Ovary (tissue), 10 donors: ENCODE measurements at regions of chr11 and their contacts with region 1.

Region 1: DNA sequence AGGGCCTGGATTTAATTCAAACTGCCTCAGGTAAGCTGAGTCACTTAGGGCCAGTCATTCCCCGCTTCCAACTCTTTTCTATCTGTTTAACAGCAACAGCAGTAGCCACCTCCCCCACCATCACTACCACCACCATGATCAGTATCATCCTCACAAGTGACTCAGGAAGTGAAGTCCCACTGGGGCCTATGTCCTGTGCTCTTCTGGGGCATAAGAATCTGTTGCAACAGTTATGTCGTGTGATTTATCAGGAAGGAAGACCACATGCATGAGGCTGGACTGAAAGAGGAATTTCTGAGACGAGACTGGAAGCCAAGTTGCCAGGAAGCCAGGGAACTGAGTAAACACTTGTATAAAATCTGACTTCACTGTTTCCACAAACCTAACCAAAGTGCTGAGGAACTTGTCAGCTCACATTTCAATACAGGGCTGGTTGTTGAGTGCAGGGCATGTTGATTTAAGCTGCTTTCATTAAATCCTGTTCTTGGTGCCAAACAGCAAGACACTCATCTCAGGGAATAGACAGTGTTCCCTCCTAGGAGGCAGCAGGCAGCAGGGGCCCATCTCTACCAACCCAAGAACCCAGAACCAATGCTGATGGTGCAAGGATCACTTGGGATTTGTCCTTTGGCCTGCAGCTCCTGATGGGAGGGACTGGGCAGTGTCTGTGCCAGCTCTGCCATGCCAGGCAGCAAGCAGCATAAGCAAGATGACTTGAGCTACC is 226.7 kb upstream of the NARS2 start:
- DNase-seq: peak in 1 of 5 donors; percentile 49
- H3K4me3 ChIP-seq: no peak overlapping the region
- H3K27ac ChIP-seq: no peak overlapping the region
- H3K4me1 ChIP-seq: peaks cover 18% of the 10 kb centered on the region
- H3K27me3 ChIP-seq: no peaks in the 10 kb centered on the region
- CTCF ChIP-seq: no peak
- EP300 ChIP-seq: no peak
- POLR2A ChIP-seq: no peak

Region 2: GRCh38 chr11:78982473-78982872 is 181.2 kb after region 1 on chr11:
- intact Hi-C with region 1: no loop called
- DNase-seq: no peak
- H3K4me3 ChIP-seq: no peak overlapping the region
- H3K27ac ChIP-seq: no peak overlapping the region
- H3K4me1 ChIP-seq: no peaks in the 10 kb centered on the region
- H3K27me3 ChIP-seq: no peaks in the 10 kb centered on the region
- CTCF ChIP-seq: no peak
- EP300 ChIP-seq: no peak
- POLR2A ChIP-seq: no peak

Region 3: DNA sequence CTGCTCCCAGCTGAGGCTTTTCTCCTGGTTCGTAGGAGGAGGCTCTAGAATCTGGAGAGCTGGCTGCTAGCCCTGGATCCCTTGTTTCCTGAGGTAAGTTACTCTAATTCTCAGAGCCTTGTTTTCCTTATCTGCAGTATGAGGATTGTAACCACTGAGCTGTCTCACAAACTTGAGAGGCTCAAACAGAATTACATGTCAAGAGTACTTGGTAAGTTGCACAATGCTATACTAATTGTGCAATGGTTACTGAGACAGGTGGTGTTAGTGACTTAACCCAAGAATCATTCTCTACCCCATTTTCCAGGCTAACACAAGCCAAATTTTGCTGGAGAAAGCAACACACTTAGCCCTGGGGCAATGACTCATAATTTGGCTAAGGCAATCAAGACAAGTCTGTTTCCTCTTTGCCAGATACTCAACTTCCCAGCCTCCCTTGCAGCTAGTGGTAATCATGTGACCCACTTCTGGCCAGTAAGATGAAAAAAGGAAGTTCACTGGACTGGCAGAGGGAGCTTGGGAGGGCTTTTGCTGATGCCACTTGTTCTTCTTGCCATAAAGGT is 291.5 kb after region 1 on chr11:
- intact Hi-C with region 1: loop called in 1 of 4 experiments (anchors 10 kb)
- DNase-seq: peak in 2 of 5 donors; percentile 27 to 59
- H3K4me3 ChIP-seq: no peak overlapping the region
- H3K27ac ChIP-seq: no peak overlapping the region
- H3K4me1 ChIP-seq: peaks cover 11% of the 10 kb centered on the region
- H3K27me3 ChIP-seq: no peaks in the 10 kb centered on the region
- CTCF ChIP-seq: no peak
- EP300 ChIP-seq: no peak
- POLR2A ChIP-seq: no peak

Region 4: GRCh38 chr11:79648766-79649520 is 847.6 kb after region 1 on chr11:
- intact Hi-C with region 1: no loop called
- DNase-seq: no peak
- H3K4me3 ChIP-seq: no peak overlapping the region
- H3K27ac ChIP-seq: no peak overlapping the region
- H3K4me1 ChIP-seq: no peaks in the 10 kb centered on the region
- H3K27me3 ChIP-seq: no peaks in the 10 kb centered on the region
- CTCF ChIP-seq: no peak
- EP300 ChIP-seq: no peak
- POLR2A ChIP-seq: no peak